Activated T-helper 1 cell treated with anti-CD3 and anti-CD28 coated beads, Interleukin-12 subunit alpha, Interleukin-12 subunit beta, Interleukin-2, Interleukin-4 antibody, amounts not matched to agents 30 ng/mL and 10 ng/mL and 1 ng/mL, durations not matched to agents 14 hours and 24 hours and 36 hours (primary cell): ENCODE measurements at regions of chr14 and their contacts with region 1.

Region 1: DNA sequence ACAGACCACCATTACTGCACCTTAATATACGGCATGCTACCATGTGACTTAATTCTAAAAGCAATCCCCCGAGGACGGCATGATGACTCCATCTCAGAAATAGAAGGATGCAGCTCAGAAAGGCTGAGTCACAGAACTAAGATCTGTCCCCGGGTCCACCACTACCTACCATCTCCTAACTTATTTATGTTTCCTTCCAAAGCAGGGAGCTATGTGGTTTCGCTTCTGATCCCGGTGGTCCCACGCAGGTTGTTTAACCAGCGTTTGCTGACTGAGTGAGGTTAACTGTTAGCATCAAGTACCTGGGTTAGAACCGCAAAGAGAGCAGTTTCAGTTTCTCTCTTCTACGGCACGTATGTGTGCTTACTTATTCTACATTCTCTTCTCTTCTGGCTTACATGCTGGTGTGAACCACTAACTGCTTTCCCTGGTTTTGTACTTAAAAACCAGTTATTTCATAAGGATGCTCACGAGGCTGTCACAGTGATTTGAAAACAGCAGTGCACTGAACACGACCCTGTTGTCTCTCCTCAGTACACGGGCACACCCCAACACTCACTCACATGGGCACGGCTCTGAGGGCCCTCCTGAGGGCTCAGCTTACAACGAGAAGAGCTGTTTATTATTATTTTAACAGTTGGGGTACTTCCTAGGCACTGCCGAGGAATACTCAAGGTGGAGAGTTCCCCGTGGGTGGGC is 66.7 kb downstream of the CCDC88C start:
- DNase-seq: peak; percentile 72
- H3K4me3 Mint-ChIP-seq: peak overlapping the region; percentile 74
- H3K27ac Mint-ChIP-seq: peak overlapping the region; percentile 94
- H3K4me1 Mint-ChIP-seq: peaks cover 89% of the 10 kb centered on the region
- H3K27me3 Mint-ChIP-seq: no peaks in the 10 kb centered on the region

Region 2: GRCh38 chr14:91021991-91022621 is 328.9 kb before region 1 on chr14:
- intact Hi-C with region 1: loop called (anchors 1 kb)
- DNase-seq: no peak
- H3K4me3 Mint-ChIP-seq: peak overlapping the region; percentile 76
- H3K27ac Mint-ChIP-seq: peak overlapping the region; percentile 94
- H3K4me1 Mint-ChIP-seq: peaks cover 83% of the 10 kb centered on the region
- H3K27me3 Mint-ChIP-seq: no peaks in the 10 kb centered on the region

Region 3: DNA sequence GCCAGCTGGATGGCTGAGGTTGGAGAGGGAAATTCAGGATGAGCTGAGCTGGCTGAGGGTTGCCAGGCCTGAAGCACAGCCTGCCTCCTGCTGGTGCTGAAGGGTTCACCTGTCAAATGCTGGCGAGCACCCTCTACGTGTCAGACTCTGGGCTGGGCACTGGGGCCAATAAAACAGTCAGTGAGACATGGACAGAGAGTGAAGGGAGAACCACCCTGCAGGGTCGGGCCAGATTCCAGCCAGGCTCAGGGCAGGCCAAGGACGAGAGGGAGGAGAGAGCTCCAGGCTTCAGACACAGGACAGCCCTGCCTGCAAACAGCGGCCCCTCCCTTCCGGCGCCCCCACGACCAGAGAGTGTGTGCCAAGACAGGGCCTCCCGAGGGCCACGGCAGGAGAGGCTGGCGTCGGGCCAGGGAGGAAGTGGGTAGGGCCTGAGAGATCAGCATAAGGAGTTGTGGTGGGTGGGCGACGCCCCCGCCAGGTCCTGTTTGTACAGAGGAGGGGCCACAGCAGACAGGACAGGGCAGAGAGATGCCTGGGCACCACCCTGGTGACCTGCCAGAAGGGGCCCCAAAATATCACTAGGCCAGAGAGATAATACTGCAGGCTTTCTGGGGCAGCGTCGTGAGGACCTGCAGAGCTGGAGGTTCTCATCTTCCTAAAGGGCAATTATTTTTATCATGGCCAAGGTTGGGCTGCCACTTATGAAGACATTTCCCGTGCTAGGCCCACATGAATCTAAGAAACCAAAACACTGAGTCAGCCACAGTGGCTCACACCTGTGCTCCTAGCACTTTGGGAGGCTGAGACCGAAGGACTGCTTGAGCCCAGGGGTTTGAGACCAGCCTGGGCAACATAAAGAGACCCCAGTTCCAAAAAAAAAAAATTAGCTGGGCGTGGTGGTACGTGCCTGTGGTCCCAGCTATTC is 33.3 kb before region 1 on chr14:
- intact Hi-C with region 1: loop called (anchors 1 kb)
- DNase-seq: peak; percentile 66
- H3K4me3 Mint-ChIP-seq: peak overlapping the region; percentile 75
- H3K27ac Mint-ChIP-seq: peak overlapping the region; percentile 96
- H3K4me1 Mint-ChIP-seq: peaks cover 68% of the 10 kb centered on the region
- H3K27me3 Mint-ChIP-seq: no peaks in the 10 kb centered on the region

Region 4: DNA sequence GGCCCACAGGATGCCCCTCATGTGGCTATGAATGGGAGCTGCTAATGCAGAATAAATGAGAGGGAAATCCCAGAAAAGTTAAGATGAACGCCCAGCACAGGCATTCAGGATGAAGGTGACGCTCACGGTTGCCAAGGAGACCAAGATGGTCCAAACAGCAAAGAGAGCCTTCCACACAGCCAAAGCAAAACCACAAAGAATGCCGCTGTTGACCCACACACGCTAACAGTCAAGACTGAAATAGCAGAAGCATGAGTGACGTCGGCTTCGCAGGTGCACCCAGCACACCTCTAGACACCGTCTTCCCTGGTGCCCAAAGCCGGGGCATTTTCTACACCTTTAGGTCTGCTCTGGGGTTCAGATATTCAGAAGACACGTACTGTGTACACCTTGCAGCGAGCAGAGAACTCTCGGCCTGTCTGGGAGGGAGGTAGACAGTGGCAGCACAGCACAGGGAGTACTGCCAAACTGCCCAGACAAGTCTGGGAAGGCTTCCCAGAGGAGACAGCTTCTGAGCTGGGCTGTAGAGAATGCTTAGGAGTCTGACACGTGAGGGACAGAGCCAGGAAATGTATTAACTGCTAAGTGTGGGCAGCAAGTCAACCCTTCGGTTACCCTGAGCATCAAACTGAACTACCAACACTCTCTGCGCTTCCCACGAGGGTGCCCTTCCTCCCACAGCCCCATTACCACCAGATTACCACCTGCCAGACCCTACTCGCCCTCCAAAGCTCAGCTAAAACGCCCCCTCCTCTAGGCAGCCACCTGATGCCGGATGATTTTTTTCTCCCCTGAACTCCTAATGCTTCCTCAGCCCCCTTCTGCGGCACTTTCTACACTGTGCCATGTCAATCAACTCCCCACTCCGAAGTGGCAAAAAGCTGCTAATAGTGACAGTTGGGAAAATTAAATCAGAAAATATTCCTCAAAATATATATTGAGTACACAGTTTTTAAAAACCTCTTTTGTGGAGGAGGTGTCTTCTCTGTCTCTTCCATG is 16.5 kb after region 1 on chr14:
- intact Hi-C with region 1: loop called (anchors 1 kb)
- DNase-seq: peak; percentile 51
- H3K4me3 Mint-ChIP-seq: peak overlapping the region; percentile 73
- H3K27ac Mint-ChIP-seq: peak overlapping the region; percentile 87
- H3K4me1 Mint-ChIP-seq: peaks cover 75% of the 10 kb centered on the region
- H3K27me3 Mint-ChIP-seq: no peaks in the 10 kb centered on the region

Region 5: DNA sequence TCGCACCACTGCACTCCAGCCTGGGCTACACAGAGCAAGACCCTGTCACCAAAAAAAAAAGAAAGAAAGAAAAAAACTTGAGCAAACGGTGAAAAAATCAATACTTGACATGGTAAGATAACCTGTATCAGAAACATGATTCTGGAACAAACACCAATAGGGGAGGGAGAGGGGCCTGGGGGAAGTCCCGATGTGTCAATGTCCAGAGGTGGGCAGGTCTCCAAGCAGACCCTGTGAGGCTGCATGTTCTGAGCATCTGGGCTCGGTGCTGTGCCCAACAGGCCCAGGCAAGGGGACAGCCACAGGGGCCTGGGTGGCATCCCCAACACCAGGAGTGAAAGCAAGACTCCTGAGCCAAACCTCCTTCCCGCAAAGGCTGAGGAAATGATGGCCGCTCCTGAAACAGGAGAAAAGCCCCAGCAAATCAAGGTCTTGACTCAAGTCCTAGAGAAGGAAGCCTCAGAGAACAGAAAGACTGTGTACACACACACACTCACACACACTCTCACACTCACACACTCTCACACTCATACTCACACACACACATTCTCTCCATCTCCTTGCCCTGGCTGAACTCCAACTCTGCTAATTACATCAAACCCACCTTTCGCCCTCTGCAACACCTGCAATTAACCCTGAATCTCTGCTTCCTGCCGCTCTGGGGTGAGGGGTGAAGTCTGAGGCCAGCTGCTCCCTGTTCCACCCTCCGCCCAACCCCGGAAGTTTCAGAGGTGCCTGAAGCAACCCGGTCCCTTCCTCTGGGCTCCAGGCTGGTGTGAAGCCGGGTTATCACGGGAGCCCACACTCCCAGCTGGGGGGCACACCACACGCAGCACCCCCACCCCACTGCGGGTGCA is 46.2 kb after region 1 on chr14:
- intact Hi-C with region 1: loop called (anchors 1 kb)
- DNase-seq: peak; percentile 54
- H3K4me3 Mint-ChIP-seq: peak overlapping the region; percentile 73
- H3K27ac Mint-ChIP-seq: peak overlapping the region; percentile 93
- H3K4me1 Mint-ChIP-seq: peaks cover 78% of the 10 kb centered on the region
- H3K27me3 Mint-ChIP-seq: no peaks in the 10 kb centered on the region

Region 6: DNA sequence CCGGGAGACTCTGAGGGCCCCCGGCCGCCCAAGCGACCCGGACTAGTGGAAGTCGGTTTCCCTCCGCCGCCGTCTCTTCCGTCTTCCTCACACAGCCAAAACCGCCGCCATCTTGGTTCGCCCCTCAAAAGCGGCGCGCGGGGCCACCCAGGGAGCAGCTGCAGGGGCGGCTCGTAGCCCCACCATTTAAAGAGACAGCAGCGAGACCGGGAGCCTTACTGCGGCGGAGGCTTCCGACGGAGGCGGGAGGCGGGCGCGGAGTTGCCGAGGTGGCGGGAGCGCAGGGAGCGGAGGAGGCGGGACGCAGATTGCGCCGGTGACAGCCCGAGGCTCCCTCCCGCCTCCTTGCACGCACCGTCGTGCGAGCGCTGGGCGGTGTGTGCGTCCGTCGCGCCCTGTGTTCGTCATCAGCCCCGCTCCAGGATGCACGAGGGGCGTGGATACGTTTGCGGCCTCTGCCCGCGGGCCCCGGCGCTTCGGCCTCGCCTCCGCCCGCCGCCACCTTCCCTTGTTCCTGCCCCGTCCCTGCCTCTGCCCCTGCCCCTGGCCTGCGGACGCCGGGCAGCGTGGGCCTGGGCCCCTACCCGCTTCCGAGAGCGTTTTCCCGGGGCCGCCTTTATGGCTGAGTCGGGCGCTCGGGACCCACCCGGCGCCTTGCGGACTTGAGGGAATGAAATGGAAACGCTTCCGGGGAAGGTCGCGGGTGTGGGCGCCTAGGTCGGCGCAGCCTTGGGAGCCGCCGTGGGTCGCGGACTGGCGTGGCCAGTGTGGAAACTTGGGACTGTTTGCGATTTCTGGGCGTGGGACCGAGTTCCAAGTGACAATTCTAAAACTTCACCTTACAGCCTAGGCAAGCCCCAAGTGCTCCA is 159.4 kb after region 1 on chr14 and contains the start of gene PPP4R3A:
- intact Hi-C with region 1: loop called (anchors 1 kb)
- DNase-seq: peak; percentile 91
- H3K4me3 Mint-ChIP-seq: peak within 1 kb of the TSS; percentile 98
- H3K27ac Mint-ChIP-seq: peak within 1 kb of the TSS; percentile 100
- H3K4me1 Mint-ChIP-seq: peaks cover 29% of the 10 kb centered on the region
- H3K27me3 Mint-ChIP-seq: peaks cover 5% of the 10 kb centered on the region
- total RNA-seq, gene PPP4R3A: 130 and 144 TPM in 2 replicates

Region 7: GRCh38 chr14:91624757-91625156 is 273.8 kb after region 1 on chr14:
- intact Hi-C with region 1: no loop called
- DNase-seq: no peak
- H3K4me3 Mint-ChIP-seq: no peak overlapping the region
- H3K27ac Mint-ChIP-seq: no peak overlapping the region
- H3K4me1 Mint-ChIP-seq: no peaks in the 10 kb centered on the region
- H3K27me3 Mint-ChIP-seq: peaks cover 5% of the 10 kb centered on the region